Sigmoid colon (tissue), 7 donors: ENCODE measurements at regions of chr5 and their contacts with region 1.

Region 1: DNA sequence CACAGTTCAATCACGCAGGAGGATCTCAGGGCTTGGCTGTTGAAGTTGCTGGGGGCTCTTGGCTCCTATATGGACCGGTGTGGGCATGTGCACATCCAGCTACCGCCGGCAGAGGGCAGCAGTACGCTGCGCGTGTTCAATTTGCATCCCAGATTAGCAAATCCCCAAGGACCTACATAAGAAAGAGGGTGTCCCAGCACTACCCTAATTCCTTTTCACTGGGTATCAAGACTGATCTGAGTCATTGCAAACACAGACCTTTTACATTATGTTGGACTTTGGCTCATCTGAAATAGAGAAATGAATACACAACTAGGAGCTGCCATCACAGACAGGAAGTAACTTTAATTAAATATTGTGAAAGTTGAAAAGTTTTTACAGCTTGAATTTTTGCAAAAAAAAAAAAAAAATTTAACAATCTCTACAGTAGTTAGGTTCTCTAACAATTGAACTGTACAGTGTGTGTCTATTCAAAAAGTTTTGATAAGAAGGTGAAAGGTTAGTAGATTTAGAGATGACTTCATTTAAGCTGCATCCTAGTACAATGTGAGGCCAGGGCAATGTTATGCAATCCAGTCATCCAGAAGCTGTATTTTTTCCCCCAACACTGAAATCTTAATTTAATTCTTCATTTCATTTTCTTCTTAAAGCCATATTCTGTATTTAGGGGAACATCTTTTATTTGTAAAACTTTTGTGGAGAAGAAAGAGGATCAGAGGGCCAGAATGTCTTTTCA is 404.0 kb downstream of the EBF1 start:
- DNase-seq: peak; percentile 82
- H3K4me3 ChIP-seq: no peak overlapping the region
- H3K27ac ChIP-seq: peak overlapping the region in 3 of 4 donors; percentile 0 to 37 (median 25)
- H3K4me1 ChIP-seq: no peaks in the 10 kb centered on the region
- H3K27me3 ChIP-seq: peaks cover 0 to 20% (median 5%) of the 10 kb centered on the region in 3 donors
- CTCF ChIP-seq: peak; percentile 79 to 96 (median 93)
- EP300 ChIP-seq: no peak
- POLR2A ChIP-seq: no peak

Region 2: DNA sequence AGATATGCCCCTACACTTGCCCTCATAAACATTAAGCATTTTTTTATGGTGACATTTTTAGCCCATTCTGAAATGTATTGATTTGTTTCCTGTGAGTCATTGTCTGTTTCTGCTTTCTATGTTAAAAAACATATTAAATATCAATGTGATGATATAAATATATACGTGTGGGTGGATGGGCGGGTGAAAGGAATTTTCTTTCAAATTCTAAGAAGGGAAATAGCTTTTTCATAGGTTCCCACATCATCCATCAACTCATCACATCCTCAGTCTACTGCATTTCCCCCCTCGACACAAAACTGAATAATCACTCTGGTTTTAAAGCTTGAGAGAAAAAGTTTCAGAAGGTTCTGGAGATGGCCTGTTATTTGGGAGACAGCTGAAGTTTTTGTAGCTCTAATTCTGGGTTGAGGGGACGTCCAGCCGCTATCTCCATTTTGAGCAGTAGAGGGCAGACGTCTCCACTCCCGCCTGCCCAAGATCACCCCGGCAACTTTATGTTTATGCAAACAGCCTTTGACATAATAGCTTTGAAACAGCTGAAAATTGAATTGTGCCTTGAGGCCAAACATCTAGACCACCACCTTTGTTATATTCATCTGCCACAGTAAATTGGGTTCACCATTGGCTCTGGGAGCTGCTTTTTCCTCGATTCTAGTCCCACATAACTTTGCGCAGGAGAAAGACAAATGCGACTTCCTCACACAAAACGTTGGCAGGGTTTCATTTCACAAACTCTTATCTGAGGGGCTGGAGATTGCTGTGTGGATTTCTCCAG is 620.6 kb before region 1 on chr5:
- intact Hi-C with region 1: loop called (anchors 5 kb)
- DNase-seq: peak; percentile 77
- H3K4me3 ChIP-seq: peak overlapping the region in 3 of 4 donors; percentile 23 to 38 (median 31)
- H3K27ac ChIP-seq: peak overlapping the region in 3 of 4 donors; percentile 20 to 47 (median 34)
- H3K4me1 ChIP-seq: no peaks in the 10 kb centered on the region
- H3K27me3 ChIP-seq: no peaks in the 10 kb centered on the region
- CTCF ChIP-seq: peak; percentile 38 to 81 (median 58)
- EP300 ChIP-seq: no peak
- POLR2A ChIP-seq: no peak

Region 3: GRCh38 chr5:158174918-158175851 is 520.6 kb before region 1 on chr5:
- intact Hi-C with region 1: loop called (anchors 2 kb)
- DNase-seq: peak; percentile 84
- H3K4me3 ChIP-seq: no peak overlapping the region
- H3K27ac ChIP-seq: peak overlapping the region in 3 of 4 donors; percentile 2 to 34 (median 17)
- H3K4me1 ChIP-seq: peaks cover 0 to 14% (median 2%) of the 10 kb centered on the region in 4 donors
- H3K27me3 ChIP-seq: no peaks in the 10 kb centered on the region
- CTCF ChIP-seq: peak; percentile 46 to 73 (median 58)
- EP300 ChIP-seq: no peak
- POLR2A ChIP-seq: no peak

Region 4: GRCh38 chr5:158739951-158740757 is 44.4 kb after region 1 on chr5:
- intact Hi-C with region 1: no loop called
- DNase-seq: no peak
- H3K4me3 ChIP-seq: no peak overlapping the region
- H3K27ac ChIP-seq: no peak overlapping the region
- H3K4me1 ChIP-seq: no peaks in the 10 kb centered on the region
- H3K27me3 ChIP-seq: peaks cover 0 to 6% (median 0%) of the 10 kb centered on the region in 3 donors
- CTCF ChIP-seq: peak in 1 of 4 experiments; percentile 8
- EP300 ChIP-seq: no peak
- POLR2A ChIP-seq: no peak

Region 5: GRCh38 chr5:159106569-159107282 is 411.0 kb after region 1 on chr5:
- intact Hi-C with region 1: loop called (anchors 1 kb)
- DNase-seq: peak; percentile 88
- H3K4me3 ChIP-seq: peak overlapping the region; percentile 8 to 36 (median 32)
- H3K27ac ChIP-seq: peak overlapping the region in 1 of 4 donors; percentile 51
- H3K4me1 ChIP-seq: peaks cover 0 to 26% (median 24%) of the 10 kb centered on the region in 4 donors
- H3K27me3 ChIP-seq: peaks cover 21 to 68% (median 55%) of the 10 kb centered on the region in 3 donors
- CTCF ChIP-seq: peak; percentile 73 to 91 (median 86)
- EP300 ChIP-seq: no peak
- POLR2A ChIP-seq: no peak

Region 6: DNA sequence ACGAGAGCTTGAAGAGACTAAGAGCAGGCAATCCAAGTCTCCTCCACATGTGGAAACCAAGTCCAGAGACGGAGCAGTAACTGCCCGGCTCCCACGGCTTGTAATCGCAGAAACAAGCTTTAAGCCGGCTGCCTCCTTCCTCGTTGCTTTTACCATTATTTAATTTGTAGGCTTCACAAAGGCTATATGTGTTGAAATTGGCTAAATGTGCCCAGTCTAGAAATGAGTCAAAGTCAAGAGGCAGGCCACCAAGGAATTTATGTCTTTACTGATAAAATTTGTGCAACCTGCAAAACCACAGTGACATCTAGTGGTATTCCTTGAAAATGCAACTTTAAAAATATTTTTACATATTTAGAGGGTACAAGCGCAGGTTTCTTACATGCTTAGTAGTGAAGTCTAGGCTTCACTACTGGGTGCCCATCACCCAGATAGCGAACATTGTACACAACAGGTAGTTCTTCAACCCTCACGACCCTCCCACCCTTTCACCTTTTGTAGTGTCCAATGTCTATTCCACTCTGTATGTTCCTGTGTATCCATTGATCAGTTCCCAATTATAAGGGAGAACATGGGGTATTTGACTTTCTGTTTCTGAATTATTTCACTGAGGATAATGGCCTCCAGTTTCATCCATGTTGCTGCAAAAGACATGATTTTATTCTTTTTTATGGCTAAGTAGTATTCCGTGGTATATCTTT is 437.4 kb after region 1 on chr5:
- intact Hi-C with region 1: loop called (anchors 2 kb)
- DNase-seq: no peak
- H3K4me3 ChIP-seq: no peak overlapping the region
- H3K27ac ChIP-seq: no peak overlapping the region
- H3K4me1 ChIP-seq: peaks cover 0 to 11% (median 5%) of the 10 kb centered on the region in 4 donors
- H3K27me3 ChIP-seq: no peaks in the 10 kb centered on the region
- CTCF ChIP-seq: peak; percentile 28 to 76 (median 56)
- EP300 ChIP-seq: no peak
- POLR2A ChIP-seq: no peak